ENCODE measurements at regions of chr11 and their contacts with region 1.

Region 1: GRCh38 chr11:128848815-128849455 is 18.2 kb downstream of the KCNJ1 start:
- DNase-seq: peak; percentile 74
- CTCF ChIP-seq: peak; percentile 82

Region 2: DNA sequence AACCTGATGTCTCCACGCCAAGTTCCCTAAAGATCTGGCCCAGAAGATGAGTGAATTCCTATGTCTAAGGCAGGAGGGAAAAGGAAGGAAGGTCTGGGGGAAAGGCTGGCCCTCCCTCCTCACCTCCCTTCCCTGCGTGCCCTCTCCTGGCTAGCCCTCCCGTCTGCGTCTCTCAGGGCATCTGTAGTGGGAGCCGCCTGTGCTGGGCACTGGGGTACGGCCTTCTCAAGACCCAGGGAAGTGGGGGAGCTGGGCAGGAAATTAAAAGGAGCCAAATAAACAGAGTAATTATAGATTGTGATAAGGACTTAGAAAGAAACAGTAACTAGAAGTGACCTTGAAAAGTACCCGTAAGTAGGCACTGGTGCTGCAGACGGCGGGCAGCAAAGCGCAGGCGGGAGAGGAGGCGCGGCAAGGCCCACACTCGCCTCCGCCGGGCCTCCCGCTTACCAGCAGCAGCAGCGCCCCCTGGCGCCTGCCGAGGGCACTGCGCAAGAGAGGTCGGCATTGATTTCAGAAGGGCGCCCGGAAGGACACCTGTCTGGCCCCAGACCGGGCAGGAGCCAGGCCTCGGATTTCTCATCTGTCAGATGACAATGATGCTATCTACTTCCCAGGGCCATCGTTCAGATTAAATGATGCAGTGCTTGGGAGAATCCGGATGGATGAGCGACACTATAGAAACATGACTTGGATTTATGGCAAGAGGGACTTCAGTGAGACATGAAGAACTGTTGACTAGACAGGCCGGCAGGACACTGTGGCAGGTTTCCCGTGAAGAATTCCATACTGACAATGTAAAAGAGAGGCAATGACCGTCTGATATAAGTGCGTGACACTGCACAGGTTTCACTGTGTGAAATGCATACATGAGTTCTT is 10.9 kb after region 1 on chr11:
- CTCF ChIA-PET with region 1: interaction called, 15 read pairs
- POLR2A ChIA-PET with region 1: no interaction called
- DNase-seq: peak; percentile 86
- CTCF ChIP-seq: peak; percentile 94

Measured in GM10248 (cell line).